ENCODE measurements at regions of chr9 and their contacts with region 1.

Region 1: GRCh38 chr9:101530077-101530711 is 3.5 kb upstream of the RNF20 start:
- DNase-seq: peak; percentile 85
- ATAC-seq: peak; percentile 41
- H3K4me3 ChIP-seq: no peak overlapping the region
- H3K4me3 Mint-ChIP-seq: no peak overlapping the region
- H3K27ac ChIP-seq: no peak overlapping the region
- H3K27ac Mint-ChIP-seq: no peak overlapping the region
- H3K4me1 ChIP-seq: peaks cover 9 to 12% of the 10 kb centered on the region in 2 donors
- H3K4me1 Mint-ChIP-seq: peaks cover 18% of the 10 kb centered on the region
- H3K27me3 ChIP-seq: peaks cover 0 to 3% (median 3%) of the 10 kb centered on the region in 4 experiments
- H3K27me3 Mint-ChIP-seq: peaks cover 8% of the 10 kb centered on the region
- CTCF ChIP-seq: peak; percentile 91

Region 2: GRCh38 chr9:101398068-101398929 is 131.9 kb before region 1 on chr9 and contains the starts of genes MRPL50 and ZNF189:
- CTCF ChIA-PET with region 1: interaction called, 5 read pairs
- POLR2A ChIA-PET with region 1: no interaction called
- intact Hi-C with region 1: loop called (anchors 1 kb)
- DNase-seq: peak; percentile 99
- ATAC-seq: peak; percentile 93
- H3K4me3 ChIP-seq: peak within 1 kb of the TSS; percentile 72 to 98 (median 92)
- H3K4me3 Mint-ChIP-seq: peak within 1 kb of the TSS; percentile 100
- H3K27ac ChIP-seq: peak within 1 kb of the TSS; percentile 87 to 97
- H3K27ac Mint-ChIP-seq: peak within 1 kb of the TSS; percentile 99
- H3K4me1 ChIP-seq: peaks cover 20 to 21% of the 10 kb centered on the region in 2 donors
- H3K4me1 Mint-ChIP-seq: peaks cover 74% of the 10 kb centered on the region
- H3K27me3 ChIP-seq: no peaks in the 10 kb centered on the region
- H3K27me3 Mint-ChIP-seq: no peaks in the 10 kb centered on the region
- CTCF ChIP-seq: no peak
- total RNA-seq, gene MRPL50: 16.6 and 18.0 TPM in 2 replicates
- total RNA-seq, gene ZNF189: 25.7 and 30.8 TPM in 2 replicates

Region 3: GRCh38 chr9:101449140-101449721 is 81.0 kb before region 1 on chr9:
- CTCF ChIA-PET with region 1: interaction called, 21 read pairs
- POLR2A ChIA-PET with region 1: no interaction called
- intact Hi-C with region 1: loop called (anchors 1 kb)
- DNase-seq: peak; percentile 69
- ATAC-seq: peak; percentile 93
- H3K4me3 ChIP-seq: peak overlapping the region in 4 of 5 experiments; percentile 35 to 56 (median 47)
- H3K4me3 Mint-ChIP-seq: peak overlapping the region; percentile 82
- H3K27ac ChIP-seq: no peak overlapping the region
- H3K27ac Mint-ChIP-seq: no peak overlapping the region
- H3K4me1 ChIP-seq: peaks cover 10 to 12% of the 10 kb centered on the region in 2 donors
- H3K4me1 Mint-ChIP-seq: peaks cover 12% of the 10 kb centered on the region
- H3K27me3 ChIP-seq: peaks cover 0 to 29% (median 25%) of the 10 kb centered on the region in 4 experiments
- H3K27me3 Mint-ChIP-seq: peaks cover 65% of the 10 kb centered on the region
- CTCF ChIP-seq: peak; percentile 77

Region 4: DNA sequence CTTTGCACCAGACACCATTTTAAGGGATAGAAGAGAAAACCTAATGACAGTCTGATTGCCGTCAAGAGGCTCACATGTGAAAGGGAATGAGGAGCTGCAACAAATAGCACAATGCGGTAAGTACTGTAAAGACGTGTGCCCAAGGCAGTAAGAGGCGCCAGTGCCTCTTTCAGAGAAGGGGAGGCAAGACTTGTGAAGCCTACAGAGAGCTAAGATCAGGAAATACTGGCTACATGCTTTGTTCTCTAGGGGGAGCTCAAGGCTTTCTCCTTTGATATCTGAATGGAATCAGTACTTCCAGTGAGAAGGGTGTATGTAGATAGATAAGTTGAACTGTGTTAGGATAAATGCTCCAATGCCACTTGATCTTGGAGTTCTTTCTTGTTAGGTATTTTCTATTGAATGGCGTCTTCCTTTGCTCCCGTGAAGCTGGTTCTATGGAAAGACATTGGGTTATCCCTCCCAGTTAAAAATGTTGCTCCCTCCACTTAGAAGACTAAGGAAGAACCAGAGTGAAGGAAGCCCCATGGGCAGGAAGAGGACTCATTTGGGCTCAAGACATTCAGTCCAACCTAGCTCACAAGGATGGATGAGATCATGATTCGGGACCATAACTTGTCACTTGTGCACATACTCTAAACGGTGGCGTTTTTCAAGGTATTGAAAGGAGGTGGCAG is 71.1 kb before region 1 on chr9:
- CTCF ChIA-PET with region 1: interaction called, 35 read pairs
- POLR2A ChIA-PET with region 1: no interaction called
- intact Hi-C with region 1: loop called (anchors 1 kb)
- DNase-seq: peak; percentile 42
- ATAC-seq: peak; percentile 53
- H3K4me3 ChIP-seq: no peak overlapping the region
- H3K4me3 Mint-ChIP-seq: no peak overlapping the region
- H3K27ac ChIP-seq: no peak overlapping the region
- H3K27ac Mint-ChIP-seq: no peak overlapping the region
- H3K4me1 ChIP-seq: no peaks in the 10 kb centered on the region
- H3K4me1 Mint-ChIP-seq: no peaks in the 10 kb centered on the region
- H3K27me3 ChIP-seq: peaks cover 0 to 3% (median 0%) of the 10 kb centered on the region in 4 experiments
- H3K27me3 Mint-ChIP-seq: peaks cover 29% of the 10 kb centered on the region
- CTCF ChIP-seq: peak; percentile 52